Activated CD4-positive, alpha-beta T cell treated with anti-CD3 and anti-CD28 coated beads for 36 hours (primary cell): ENCODE measurements at regions of chr1 and their contacts with region 1.

Region 1: GRCh38 chr1:226940029-226940805 is at the start of gene COQ8A:
- DNase-seq: peak; percentile 100
- ATAC-seq: peak; percentile 97
- H3K4me3 Mint-ChIP-seq: peak within 1 kb of the TSS; percentile 82
- H3K27ac Mint-ChIP-seq: peak within 1 kb of the TSS; percentile 96
- H3K4me1 Mint-ChIP-seq: peaks cover 53% of the 10 kb centered on the region
- H3K27me3 Mint-ChIP-seq: no peaks in the 10 kb centered on the region
- total RNA-seq, gene COQ8A: 21.3 to 26.9 TPM

Region 2: GRCh38 chr1:226121587-226122400 is 818.4 kb before region 1 on chr1:
- CTCF ChIA-PET with region 1: no interaction called
- POLR2A ChIA-PET with region 1: no interaction called
- intact Hi-C with region 1: no loop called
- DNase-seq: peak; percentile 86
- ATAC-seq: peak; percentile 79
- H3K4me3 Mint-ChIP-seq: peak overlapping the region; percentile 68
- H3K27ac Mint-ChIP-seq: peak overlapping the region; percentile 60
- H3K4me1 Mint-ChIP-seq: peaks cover 20% of the 10 kb centered on the region
- H3K27me3 Mint-ChIP-seq: no peaks in the 10 kb centered on the region

Region 3: DNA sequence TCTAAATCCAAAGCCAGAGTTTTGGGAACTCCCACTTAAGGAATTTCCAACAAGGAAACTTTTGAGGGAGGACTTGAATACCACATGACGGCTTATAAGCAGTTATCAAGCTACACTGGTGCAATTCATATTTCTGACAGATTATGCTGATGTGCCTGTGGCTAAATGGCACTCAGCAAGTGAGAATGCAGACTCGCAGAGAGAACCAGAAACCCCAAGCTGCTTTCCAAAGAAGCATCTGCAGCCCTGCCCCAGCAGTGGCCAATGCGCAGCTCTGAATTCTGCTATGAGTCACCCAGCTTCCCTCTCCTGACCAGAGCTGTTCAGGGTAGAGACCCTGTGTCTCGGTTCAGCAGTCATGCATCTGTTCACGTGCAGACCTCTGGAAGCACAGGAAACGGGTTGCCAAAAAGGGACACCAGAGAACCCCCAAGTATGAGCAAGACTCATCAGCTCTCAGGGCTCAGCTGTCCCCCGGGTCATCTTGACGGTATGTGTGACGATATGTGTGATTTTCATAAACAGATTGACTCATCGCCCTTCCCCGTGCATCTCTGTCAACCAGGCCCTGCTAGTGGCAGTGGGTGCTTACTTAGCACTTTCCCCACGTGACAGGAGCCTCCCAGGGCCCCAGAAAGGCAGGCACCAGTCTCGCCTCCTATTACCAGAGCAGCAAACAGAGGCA is 277.4 kb before region 1 on chr1:
- CTCF ChIA-PET with region 1: no interaction called
- POLR2A ChIA-PET with region 1: no interaction called
- intact Hi-C with region 1: no loop called
- DNase-seq: peak; percentile 91
- ATAC-seq: peak; percentile 93
- H3K4me3 Mint-ChIP-seq: peak overlapping the region; percentile 53
- H3K27ac Mint-ChIP-seq: peak overlapping the region; percentile 94
- H3K4me1 Mint-ChIP-seq: no peaks in the 10 kb centered on the region
- H3K27me3 Mint-ChIP-seq: no peaks in the 10 kb centered on the region

Region 4: GRCh38 chr1:226882631-226883409 is 57.4 kb before region 1 on chr1:
- CTCF ChIA-PET with region 1: interaction called, 3 read pairs
- POLR2A ChIA-PET with region 1: interaction called, 12 read pairs
- intact Hi-C with region 1: loop called (anchors 1 kb)
- DNase-seq: peak; percentile 54
- ATAC-seq: peak; percentile 92
- H3K4me3 Mint-ChIP-seq: peak overlapping the region; percentile 64
- H3K27ac Mint-ChIP-seq: peak overlapping the region; percentile 91
- H3K4me1 Mint-ChIP-seq: peaks cover 53% of the 10 kb centered on the region
- H3K27me3 Mint-ChIP-seq: no peaks in the 10 kb centered on the region

Region 5: GRCh38 chr1:226990133-226990716 is 50.0 kb after region 1 on chr1:
- CTCF ChIA-PET with region 1: no interaction called
- POLR2A ChIA-PET with region 1: no interaction called
- intact Hi-C with region 1: loop called in 1 of 2 experiments (anchors 1 kb)
- DNase-seq: peak; percentile 85
- ATAC-seq: peak; percentile 100
- H3K4me3 Mint-ChIP-seq: no peak overlapping the region
- H3K27ac Mint-ChIP-seq: peak overlapping the region; percentile 83
- H3K4me1 Mint-ChIP-seq: peaks cover 25% of the 10 kb centered on the region
- H3K27me3 Mint-ChIP-seq: no peaks in the 10 kb centered on the region

Region 6: GRCh38 chr1:227318003-227318852 is 378.0 kb after region 1 on chr1 and contains the start of gene CDC42BPA:
- CTCF ChIA-PET with region 1: no interaction called
- POLR2A ChIA-PET with region 1: no interaction called
- intact Hi-C with region 1: loop called in 1 of 2 experiments (anchors 2 kb)
- DNase-seq: peak; percentile 72
- ATAC-seq: peak; percentile 86
- H3K4me3 Mint-ChIP-seq: peak within 1 kb of the TSS; percentile 85
- H3K27ac Mint-ChIP-seq: peak within 1 kb of the TSS; percentile 87
- H3K4me1 Mint-ChIP-seq: peaks cover 2% of the 10 kb centered on the region
- H3K27me3 Mint-ChIP-seq: peaks cover 36% of the 10 kb centered on the region
- total RNA-seq, gene CDC42BPA: 6.0 to 7.8 TPM

Region 7: GRCh38 chr1:227542143-227543120 is 602.2 kb after region 1 on chr1:
- CTCF ChIA-PET with region 1: interaction called, 3 read pairs
- POLR2A ChIA-PET with region 1: no interaction called
- intact Hi-C with region 1: loop called in 1 of 2 experiments (anchors 5 kb)
- DNase-seq: peak; percentile 95
- ATAC-seq: peak; percentile 97
- H3K4me3 Mint-ChIP-seq: peak overlapping the region; percentile 47
- H3K27ac Mint-ChIP-seq: peak overlapping the region; percentile 72
- H3K4me1 Mint-ChIP-seq: peaks cover 4% of the 10 kb centered on the region
- H3K27me3 Mint-ChIP-seq: no peaks in the 10 kb centered on the region

Region 8: GRCh38 chr1:227563324-227564201 is 623.3 kb after region 1 on chr1 and contains the start of gene ZNF678:
- CTCF ChIA-PET with region 1: no interaction called
- POLR2A ChIA-PET with region 1: no interaction called
- intact Hi-C with region 1: loop called in 1 of 2 experiments (anchors 1 kb)
- DNase-seq: peak; percentile 95
- ATAC-seq: peak; percentile 96
- H3K4me3 Mint-ChIP-seq: peak within 1 kb of the TSS; percentile 90
- H3K27ac Mint-ChIP-seq: peak within 1 kb of the TSS; percentile 93
- H3K4me1 Mint-ChIP-seq: peaks cover 34% of the 10 kb centered on the region
- H3K27me3 Mint-ChIP-seq: peaks cover 25% of the 10 kb centered on the region
- total RNA-seq, gene ZNF678: 7.0 to 7.7 TPM

Region 9: GRCh38 chr1:227734856-227735538 is 794.8 kb after region 1 on chr1 and contains the starts of genes JMJD4 and SNAP47:
- CTCF ChIA-PET with region 1: no interaction called
- POLR2A ChIA-PET with region 1: no interaction called
- intact Hi-C with region 1: loop called in 1 of 2 experiments (anchors 10 kb)
- DNase-seq: peak; percentile 95
- ATAC-seq: peak; percentile 94
- H3K4me3 Mint-ChIP-seq: peak within 1 kb of the TSS; percentile 89
- H3K27ac Mint-ChIP-seq: peak within 1 kb of the TSS; percentile 86
- H3K4me1 Mint-ChIP-seq: peaks cover 25% of the 10 kb centered on the region
- H3K27me3 Mint-ChIP-seq: no peaks in the 10 kb centered on the region
- total RNA-seq, gene JMJD4: 14.4 to 18.1 TPM
- total RNA-seq, gene SNAP47: 30.3 to 31.2 TPM